BJ (cell line): ENCODE measurements at regions of chr14 and their contacts with region 1.

Region 1: DNA sequence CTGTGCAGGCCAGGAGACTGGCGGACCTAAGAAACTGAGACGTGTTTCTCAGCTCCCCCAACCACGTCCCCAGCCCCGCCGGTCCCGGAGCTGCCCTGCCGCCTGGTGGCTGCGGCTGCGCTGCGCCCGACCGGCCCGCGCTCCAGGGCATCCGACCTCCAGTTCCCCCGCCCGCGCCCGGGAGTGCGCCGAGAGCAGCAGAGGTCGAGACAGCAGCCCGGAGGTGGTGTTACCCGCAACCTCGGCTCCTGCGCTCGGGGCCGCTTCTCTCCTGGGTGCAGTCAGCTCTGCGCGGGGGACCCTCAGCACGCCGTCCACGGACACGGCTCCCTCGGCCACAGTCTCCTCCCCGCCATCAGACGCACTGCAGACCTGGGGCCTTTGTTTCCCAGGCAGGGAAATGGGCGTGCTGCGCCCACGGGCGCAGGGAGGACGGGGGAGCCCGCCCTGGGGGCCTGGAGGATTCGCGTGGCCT is 21.6 kb upstream of the GPR132 start:
- DNase-seq: no peak
- H3K4me3 ChIP-seq: peak overlapping the region; percentile 63
- H3K27me3 ChIP-seq: no peaks in the 10 kb centered on the region; the same call in 1 of the 2 replicates
- CTCF ChIP-seq: peak; percentile 49

Region 2: DNA sequence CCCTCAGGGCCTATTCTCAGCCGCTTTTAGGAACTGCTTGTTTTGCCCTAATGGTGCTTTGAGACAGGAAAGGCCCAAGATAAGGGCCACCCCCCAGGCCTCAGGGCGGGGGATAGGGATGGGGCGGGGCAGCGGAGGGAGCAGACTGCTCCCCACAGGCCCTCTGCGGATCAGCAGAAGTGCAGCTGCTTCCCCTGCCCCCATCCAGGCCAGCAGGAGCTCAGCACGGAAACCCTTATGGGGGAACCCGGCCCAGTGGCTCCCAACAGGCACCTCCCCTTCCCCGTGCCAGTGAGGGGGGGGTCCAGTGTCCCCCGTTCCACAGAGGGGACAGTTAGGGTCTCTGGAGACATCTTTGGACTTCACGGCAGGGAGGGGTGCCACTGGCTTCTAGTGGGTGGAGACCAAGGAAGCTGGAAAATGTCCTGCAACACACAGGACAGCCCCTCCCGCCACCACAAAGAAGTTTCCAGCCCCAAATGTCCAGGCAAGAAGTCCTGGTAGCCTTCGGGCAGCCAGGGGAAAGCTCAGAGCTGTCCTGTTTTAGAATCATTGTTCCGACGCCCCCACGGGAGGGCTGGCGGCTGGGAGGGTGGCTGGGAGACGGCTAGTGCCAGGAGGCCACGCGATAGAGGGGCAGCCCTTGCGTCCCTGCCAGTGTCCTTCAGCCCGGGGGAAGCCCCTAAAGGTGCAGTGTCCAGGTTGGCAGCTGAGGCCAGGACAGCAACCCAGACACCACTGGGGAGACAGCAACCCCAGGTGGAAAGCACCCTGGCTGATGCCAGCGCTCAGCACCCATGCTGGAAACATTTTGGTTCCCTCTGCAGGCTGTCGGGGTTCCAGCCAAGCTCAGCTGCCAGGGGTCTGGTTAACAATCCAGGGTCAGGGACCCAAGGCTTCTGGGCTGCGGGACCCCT is 11.2 kb before region 1 on chr14:
- CTCF ChIA-PET with region 1: interaction called, 20 read pairs
- POLR2A ChIA-PET with region 1: interaction called, 7 read pairs
- DNase-seq: no peak
- H3K4me3 ChIP-seq: no peak overlapping the region
- H3K27me3 ChIP-seq: peaks cover 2% of the 10 kb centered on the region
- CTCF ChIP-seq: no peak

Region 3: GRCh38 chr14:105180592-105181548 is 94.0 kb after region 1 on chr14 and contains the start of gene NUDT14:
- CTCF ChIA-PET with region 1: interaction called, 12 read pairs
- POLR2A ChIA-PET with region 1: no interaction called
- DNase-seq: no peak
- H3K4me3 ChIP-seq: peak within 1 kb of the TSS; percentile 47
- H3K27me3 ChIP-seq: no peaks in the 10 kb centered on the region; the same call in 1 of the 2 replicates
- CTCF ChIP-seq: no peak
- polyA plus RNA-seq, gene NUDT14: 6.5 and 10.9 TPM in 2 replicates